IMR-90 (cell line): ENCODE measurements at regions of chr2 and their contacts with region 1.

Region 1: DNA sequence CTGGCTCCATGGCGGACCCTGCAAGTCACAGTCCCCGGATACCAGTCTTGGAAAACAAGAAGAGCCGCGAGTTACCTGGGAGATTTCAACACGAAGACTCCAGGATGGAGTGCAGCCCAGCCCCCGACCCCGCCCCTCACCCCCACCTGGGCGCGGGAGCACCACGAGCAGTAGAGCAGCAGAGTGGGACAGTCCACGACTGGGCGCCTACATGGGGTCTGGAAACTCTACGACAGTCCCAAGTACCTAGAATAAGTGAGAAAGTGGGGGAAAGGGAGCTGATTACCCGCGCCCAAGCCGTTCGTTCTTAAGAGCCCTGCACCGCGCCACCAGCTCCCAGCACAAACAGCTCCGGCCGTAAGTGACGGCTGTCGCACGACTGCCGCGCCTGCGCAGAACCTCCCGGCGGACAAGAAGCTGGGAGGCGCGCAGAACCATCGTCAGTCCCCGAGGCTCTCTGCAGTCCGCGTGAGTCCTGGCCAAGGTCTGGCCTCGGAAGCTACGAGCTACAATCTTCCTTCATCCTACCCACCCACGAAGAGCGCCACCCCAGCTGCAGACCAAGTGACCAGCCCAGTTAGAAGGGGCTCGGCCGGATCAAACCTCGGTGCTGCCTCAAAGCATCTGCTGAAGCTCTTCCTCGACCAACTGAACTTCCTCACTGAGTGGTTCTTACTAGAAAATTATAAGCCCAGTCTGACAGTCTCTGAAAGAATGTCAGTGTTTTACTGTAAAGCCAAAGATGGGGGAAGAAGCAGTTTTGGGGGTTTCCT is at the start of gene DPY30:
- DNase-seq: peak; percentile 92
- ATAC-seq: peak; percentile 98
- H3K4me3 ChIP-seq: peak within 1 kb of the TSS; percentile 82
- H3K27ac ChIP-seq: peak within 1 kb of the TSS; percentile 57
- H3K4me1 ChIP-seq: peaks cover 2% of the 10 kb centered on the region; the same call in 1 of the 2 replicates
- H3K27me3 ChIP-seq: no peaks in the 10 kb centered on the region
- CTCF ChIP-seq: no peak
- POLR2A ChIP-seq: peak; percentile 69; the same call in 1 of the 2 replicates
- RAD21 ChIP-seq: peak; percentile 26
- total RNA-seq, gene DPY30: 65.2 and 120 TPM in 2 replicates

Region 2: GRCh38 chr2:32063310-32064161 is 23.9 kb after region 1 on chr2 and contains the start of gene SPAST:
- CTCF ChIA-PET with region 1: no interaction called
- POLR2A ChIA-PET with region 1: interaction called, 3 read pairs
- dilution Hi-C with region 1: no loop called
- in situ Hi-C with region 1: no loop called
- intact Hi-C with region 1: loop called (anchors 2 kb)
- DNase-seq: peak; percentile 95
- ATAC-seq: peak; percentile 94
- H3K4me3 ChIP-seq: peak within 1 kb of the TSS; percentile 58
- H3K27ac ChIP-seq: peak within 1 kb of the TSS; percentile 75
- H3K4me1 ChIP-seq: peaks cover 2% of the 10 kb centered on the region; the same call in 1 of the 2 replicates
- H3K27me3 ChIP-seq: no peaks in the 10 kb centered on the region
- CTCF ChIP-seq: peak; percentile 51
- POLR2A ChIP-seq: no peak; the same call in 1 of the 2 replicates
- RAD21 ChIP-seq: peak; percentile 27; the same call in 1 of the 2 replicates
- total RNA-seq, gene SPAST: 14.5 and 21.1 TPM in 2 replicates